Naive thymus-derived CD4-positive, alpha-beta T cell (primary cell): ENCODE measurements at regions of chr19 and their contacts with region 1.

Region 1: GRCh38 chr19:16076154-16076957 is at the start of gene TPM4:
- DNase-seq: peak; percentile 43 to 89 (median 50)
- ATAC-seq: peak; percentile 68
- H3K4me3 ChIP-seq: peak within 1 kb of the TSS; percentile 82
- H3K4me3 Mint-ChIP-seq: peak within 1 kb of the TSS; percentile 84 to 97 (median 90)
- H3K27ac ChIP-seq: peak within 1 kb of the TSS; percentile 89
- H3K27ac Mint-ChIP-seq: peak within 1 kb of the TSS; percentile 90 to 99 (median 97)
- H3K4me1 ChIP-seq: peaks cover 29 to 72% of the 10 kb centered on the region in 2 donors
- H3K4me1 Mint-ChIP-seq: peaks cover 54 to 80% (median 65%) of the 10 kb centered on the region in 7 donors
- H3K27me3 ChIP-seq: no peaks in the 10 kb centered on the region
- H3K27me3 Mint-ChIP-seq: no peaks in the 10 kb centered on the region
- total RNA-seq, gene TPM4: 65.8 to 435 (median 126) TPM

Region 2: GRCh38 chr19:16062789-16063188 is 13.6 kb before region 1 on chr19:
- CTCF ChIA-PET with region 1: interaction called, 7 read pairs
- POLR2A ChIA-PET with region 1: interaction called, 7 read pairs
- intact Hi-C with region 1: loop called in 1 of 2 experiments (anchors 1 kb)
- DNase-seq: peak; percentile 32 to 77 (median 63)
- ATAC-seq: peak; percentile 89
- H3K4me3 ChIP-seq: no peak overlapping the region
- H3K4me3 Mint-ChIP-seq: peak overlapping the region in 1 of 10 donors; percentile 37
- H3K27ac ChIP-seq: no peak overlapping the region
- H3K27ac Mint-ChIP-seq: peak overlapping the region in 2 of 9 donors; percentile 3 to 24
- H3K4me1 ChIP-seq: peaks cover 0 to 4% of the 10 kb centered on the region in 2 donors
- H3K4me1 Mint-ChIP-seq: peaks cover 15 to 27% (median 21%) of the 10 kb centered on the region in 7 donors
- H3K27me3 ChIP-seq: no peaks in the 10 kb centered on the region
- H3K27me3 Mint-ChIP-seq: peaks cover 0 to 10% (median 0%) of the 10 kb centered on the region in 5 donors

Region 3: DNA sequence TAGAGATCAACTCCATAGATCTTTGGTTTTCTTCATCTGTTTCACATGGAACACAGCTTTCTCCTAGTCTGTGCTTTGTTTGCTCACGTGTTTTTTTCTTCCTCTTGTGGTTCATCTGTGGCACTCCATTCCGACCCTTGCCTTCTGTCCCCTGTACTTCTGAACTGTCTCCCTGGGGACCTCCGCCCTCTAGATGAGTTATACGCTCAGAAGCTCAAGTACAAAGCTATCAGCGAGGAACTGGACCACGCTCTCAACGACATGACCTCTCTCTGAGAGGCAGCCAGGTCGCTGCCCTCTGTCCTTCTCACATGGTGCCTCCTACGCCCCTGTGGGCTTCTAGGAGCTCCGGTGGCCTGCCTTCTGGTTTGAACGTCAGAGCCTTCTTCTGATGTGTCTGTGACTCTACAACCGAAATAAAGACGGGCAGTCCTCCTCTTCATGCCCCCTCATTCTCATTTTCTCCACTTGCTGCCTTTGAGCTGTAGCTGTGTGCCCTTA is 18.8 kb after region 1 on chr19:
- CTCF ChIA-PET with region 1: interaction called, 5 read pairs
- POLR2A ChIA-PET with region 1: interaction called, 14 read pairs
- intact Hi-C with region 1: no loop called
- DNase-seq: peak in 6 of 9 donors; percentile 24 to 45 (median 32)
- ATAC-seq: peak; percentile 71
- H3K4me3 ChIP-seq: no peak overlapping the region
- H3K4me3 Mint-ChIP-seq: peak overlapping the region; percentile 34 to 70 (median 62)
- H3K27ac ChIP-seq: peak overlapping the region; percentile 56
- H3K27ac Mint-ChIP-seq: peak overlapping the region; percentile 72 to 94 (median 88)
- H3K4me1 ChIP-seq: peaks cover 0 to 20% of the 10 kb centered on the region in 2 donors
- H3K4me1 Mint-ChIP-seq: peaks cover 14 to 48% (median 42%) of the 10 kb centered on the region in 7 donors
- H3K27me3 ChIP-seq: no peaks in the 10 kb centered on the region
- H3K27me3 Mint-ChIP-seq: no peaks in the 10 kb centered on the region

Region 4: DNA sequence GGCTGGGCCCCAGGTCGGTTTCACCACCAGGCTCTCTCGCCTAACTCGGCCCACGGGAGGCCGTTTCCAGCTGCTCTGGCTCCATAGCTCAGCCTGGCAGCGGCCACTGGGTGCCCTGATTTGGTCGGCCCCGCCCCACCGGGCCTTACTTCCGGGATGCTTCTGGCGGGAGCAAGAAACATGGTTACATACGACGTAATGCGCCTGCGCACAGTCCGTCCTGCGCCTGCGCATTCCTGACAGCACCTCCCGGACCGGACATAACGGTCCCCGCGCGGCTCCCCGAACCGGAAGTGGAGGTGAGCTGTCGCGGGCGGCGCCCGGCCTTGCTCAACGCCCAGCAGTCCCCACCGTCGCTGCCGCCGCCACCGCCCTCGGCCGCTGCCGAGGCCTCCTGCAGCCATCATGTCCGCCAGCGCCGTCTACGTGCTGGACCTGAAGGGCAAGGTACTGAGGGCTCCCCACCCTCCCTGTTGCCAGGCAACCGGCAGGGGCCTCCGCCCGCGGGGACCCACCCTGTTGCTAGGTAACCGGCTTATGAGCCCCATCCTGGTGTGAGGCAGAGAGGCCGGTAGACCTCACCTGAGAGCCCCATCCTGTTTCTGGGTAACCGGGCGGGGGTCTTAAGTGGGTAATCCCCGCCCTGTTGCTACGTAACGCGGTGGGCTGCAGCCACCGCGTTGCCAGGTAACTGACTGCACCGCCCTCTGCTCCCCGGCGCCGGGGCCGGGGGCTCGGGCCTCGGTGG is 121.4 kb after region 1 on chr19 and contains the start of gene AP1M1:
- CTCF ChIA-PET with region 1: interaction called, 4 read pairs
- POLR2A ChIA-PET with region 1: no interaction called
- intact Hi-C with region 1: loop called in 1 of 2 experiments (anchors 1 kb)
- DNase-seq: peak; percentile 96 to 99 (median 97)
- ATAC-seq: peak; percentile 94
- H3K4me3 ChIP-seq: peak within 1 kb of the TSS; percentile 99
- H3K4me3 Mint-ChIP-seq: peak within 1 kb of the TSS; percentile 81 to 95 (median 90)
- H3K27ac ChIP-seq: peak within 1 kb of the TSS; percentile 95
- H3K27ac Mint-ChIP-seq: peak within 1 kb of the TSS; percentile 90 to 99 (median 97)
- H3K4me1 ChIP-seq: peaks cover 16 to 23% of the 10 kb centered on the region in 2 donors
- H3K4me1 Mint-ChIP-seq: peaks cover 38 to 49% (median 46%) of the 10 kb centered on the region in 7 donors
- H3K27me3 ChIP-seq: no peaks in the 10 kb centered on the region
- H3K27me3 Mint-ChIP-seq: no peaks in the 10 kb centered on the region
- total RNA-seq, gene AP1M1: 94.9 to 149 (median 125) TPM

Region 5: GRCh38 chr19:16897154-16897855 is 820.9 kb after region 1 on chr19:
- CTCF ChIA-PET with region 1: no interaction called
- POLR2A ChIA-PET with region 1: no interaction called
- intact Hi-C with region 1: loop called in 1 of 2 experiments (anchors 5 kb)
- DNase-seq: peak in 7 of 9 donors; percentile 9 to 77 (median 32)
- ATAC-seq: peak; percentile 80
- H3K4me3 ChIP-seq: peak overlapping the region; percentile 50
- H3K4me3 Mint-ChIP-seq: peak overlapping the region in 9 of 10 donors; percentile 43 to 81 (median 76)
- H3K27ac ChIP-seq: no peak overlapping the region
- H3K27ac Mint-ChIP-seq: peak overlapping the region in 2 of 9 donors; percentile 47 to 77
- H3K4me1 ChIP-seq: peaks cover 0 to 5% of the 10 kb centered on the region in 2 donors
- H3K4me1 Mint-ChIP-seq: peaks cover 13 to 36% (median 22%) of the 10 kb centered on the region in 7 donors
- H3K27me3 ChIP-seq: no peaks in the 10 kb centered on the region
- H3K27me3 Mint-ChIP-seq: peaks cover 6 to 50% (median 19%) of the 10 kb centered on the region in 5 donors